Activated CD8-positive, alpha-beta T cell treated with anti-CD3 and anti-CD28 coated beads for 36 hours (primary cell): ENCODE measurements at regions of chr19 and their contacts with region 1.

Region 1: GRCh38 chr19:8005534-8006256 is at the start of gene ELAVL1:
- DNase-seq: peak; percentile 90
- ATAC-seq: peak; percentile 91
- H3K4me3 Mint-ChIP-seq: peak within 1 kb of the TSS; percentile 90
- H3K27ac Mint-ChIP-seq: peak within 1 kb of the TSS; percentile 89
- H3K4me1 Mint-ChIP-seq: peaks cover 31% of the 10 kb centered on the region
- H3K27me3 Mint-ChIP-seq: no peaks in the 10 kb centered on the region
- CTCF ChIP-seq: no peak
- total RNA-seq, gene ELAVL1: 161 to 164 TPM

Region 2: DNA sequence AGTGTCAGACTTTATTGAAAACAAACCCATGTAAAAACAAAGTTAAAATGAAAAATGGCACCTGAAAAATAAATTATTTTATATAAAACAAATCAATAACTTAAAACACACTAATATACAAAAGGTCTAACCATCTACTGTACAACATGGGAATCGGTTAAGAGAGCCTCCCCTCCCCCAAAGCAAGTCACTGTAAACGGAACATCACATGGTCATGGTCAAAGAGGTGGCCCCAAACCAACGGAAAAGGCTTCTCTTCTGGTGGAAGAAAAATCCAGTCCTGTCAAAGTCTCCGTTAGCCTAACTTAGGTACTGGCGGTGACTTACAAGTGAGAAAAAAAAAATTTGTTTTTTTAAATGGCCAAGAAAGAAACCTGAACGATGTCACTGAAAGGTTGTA is 46.5 kb before region 1 on chr19:
- CTCF ChIA-PET with region 1: no interaction called
- POLR2A ChIA-PET with region 1: no interaction called
- intact Hi-C with region 1: no loop called
- DNase-seq: no peak
- ATAC-seq: no peak
- H3K4me3 Mint-ChIP-seq: no peak overlapping the region
- H3K27ac Mint-ChIP-seq: no peak overlapping the region
- H3K4me1 Mint-ChIP-seq: peaks cover 3% of the 10 kb centered on the region
- H3K27me3 Mint-ChIP-seq: no peaks in the 10 kb centered on the region
- CTCF ChIP-seq: no peak

Region 3: GRCh38 chr19:7970716-7971448 is 34.8 kb before region 1 on chr19:
- CTCF ChIA-PET with region 1: interaction called, 21 read pairs
- POLR2A ChIA-PET with region 1: interaction called, 3 read pairs
- intact Hi-C with region 1: no loop called
- DNase-seq: peak; percentile 49
- ATAC-seq: peak; percentile 67
- H3K4me3 Mint-ChIP-seq: no peak overlapping the region
- H3K27ac Mint-ChIP-seq: no peak overlapping the region
- H3K4me1 Mint-ChIP-seq: no peaks in the 10 kb centered on the region
- H3K27me3 Mint-ChIP-seq: no peaks in the 10 kb centered on the region
- CTCF ChIP-seq: peak; percentile 81

Region 4: DNA sequence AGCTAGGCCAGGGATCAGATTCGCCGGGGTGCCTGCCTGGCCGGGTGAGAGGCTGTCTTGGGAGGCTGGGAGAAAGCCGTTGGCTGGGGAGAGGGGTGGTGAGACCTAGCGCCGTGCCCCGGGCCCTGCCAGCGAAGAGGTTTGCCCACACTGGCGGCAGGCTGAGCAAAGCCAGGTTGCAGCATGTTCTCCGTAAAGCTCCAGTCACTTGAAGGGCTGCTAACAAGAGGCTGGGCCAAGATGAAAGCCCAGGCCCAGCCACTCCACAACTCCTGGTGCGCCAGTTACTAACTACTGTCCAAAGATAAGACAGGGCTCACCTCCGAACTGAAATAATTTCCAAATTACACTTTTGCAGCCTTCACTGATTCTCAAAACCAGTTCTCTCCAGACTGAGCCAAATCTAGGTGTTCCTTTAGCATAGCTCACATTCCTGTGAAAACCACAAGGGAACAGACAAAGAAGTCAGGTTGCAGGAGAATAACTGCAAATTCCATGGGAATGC is 16.6 kb before region 1 on chr19:
- CTCF ChIA-PET with region 1: interaction called, 11 read pairs
- POLR2A ChIA-PET with region 1: no interaction called
- intact Hi-C with region 1: no loop called
- DNase-seq: no peak
- ATAC-seq: no peak
- H3K4me3 Mint-ChIP-seq: no peak overlapping the region
- H3K27ac Mint-ChIP-seq: no peak overlapping the region
- H3K4me1 Mint-ChIP-seq: peaks cover 8% of the 10 kb centered on the region
- H3K27me3 Mint-ChIP-seq: no peaks in the 10 kb centered on the region
- CTCF ChIP-seq: no peak

Region 5: DNA sequence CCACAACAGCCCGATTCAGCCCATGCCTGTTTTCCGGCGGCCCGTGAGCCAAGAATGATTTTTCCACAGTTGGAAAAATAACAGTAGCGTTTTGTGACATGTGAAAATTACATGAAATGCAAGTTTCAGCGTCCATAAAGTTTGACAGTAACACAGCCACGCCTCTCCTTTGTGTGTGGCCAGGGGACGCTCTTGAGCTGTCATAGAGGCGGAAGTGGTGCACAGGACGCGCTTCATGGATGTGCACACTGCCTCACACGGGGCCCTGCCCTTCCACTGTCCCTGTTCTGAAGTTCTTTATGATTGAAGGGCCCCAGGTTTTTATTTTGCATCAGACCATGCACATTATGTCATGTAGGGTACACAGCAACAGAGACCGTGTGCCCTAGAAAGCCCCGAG is 12.1 kb after region 1 on chr19:
- CTCF ChIA-PET with region 1: interaction called, 22 read pairs
- POLR2A ChIA-PET with region 1: interaction called, 5 read pairs
- intact Hi-C with region 1: no loop called
- DNase-seq: peak; percentile 64
- ATAC-seq: peak; percentile 95
- H3K4me3 Mint-ChIP-seq: no peak overlapping the region
- H3K27ac Mint-ChIP-seq: no peak overlapping the region
- H3K4me1 Mint-ChIP-seq: peaks cover 2% of the 10 kb centered on the region
- H3K27me3 Mint-ChIP-seq: no peaks in the 10 kb centered on the region
- CTCF ChIP-seq: peak; percentile 16